Dorsolateral prefrontal cortex (tissue), 120 donors: ENCODE measurements at regions of chr1 and their contacts with region 1.

Region 1: DNA sequence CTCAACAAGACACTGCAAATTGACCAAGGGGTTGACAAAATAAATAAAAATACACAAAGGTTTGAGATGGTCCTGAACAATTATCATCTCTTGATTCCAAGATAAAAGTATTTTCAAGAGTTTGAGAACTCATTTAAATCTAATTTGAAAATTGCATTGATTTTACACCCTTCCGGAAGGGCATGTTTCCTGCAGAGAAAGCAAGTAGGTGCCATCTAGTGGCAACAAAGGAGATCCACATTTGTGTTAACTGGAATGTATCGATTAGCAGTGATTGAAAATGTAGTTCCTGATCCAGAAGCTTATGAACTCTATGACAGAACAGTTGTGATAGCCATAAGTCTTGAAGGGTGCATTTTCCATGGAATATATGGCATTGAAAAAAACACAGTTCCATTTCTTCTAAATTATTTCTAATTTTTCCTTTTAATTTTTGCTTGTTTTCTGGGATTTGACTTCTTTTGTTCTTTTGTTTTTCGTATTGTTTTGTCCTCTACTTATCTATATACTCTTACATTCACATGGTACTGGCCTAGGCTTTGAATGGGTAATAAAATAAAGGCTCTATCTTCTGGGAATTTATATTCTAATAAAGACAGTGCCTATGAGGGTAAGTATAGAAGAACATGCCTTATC is 143.7 kb downstream of the DNM3 start:
- DNase-seq: no peak
- H3K4me3 ChIP-seq: peak overlapping the region in 1 of 59 donors; percentile 13
- H3K27ac ChIP-seq: peak overlapping the region in 46 of 59 donors; percentile 1 to 77 (median 60)
- H3K27me3 ChIP-seq: no peaks in the 10 kb centered on the region
- CTCF ChIP-seq: peak; percentile 73 to 97 (median 89)

Region 2: GRCh38 chr1:171898941-171899340 is 86.0 kb before region 1 on chr1:
- intact Hi-C with region 1: loop called in 1 of 2 experiments (anchors 5 kb)
- DNase-seq: peak; percentile 38 to 92 (median 86)
- H3K4me3 ChIP-seq: peak overlapping the region in 58 of 59 donors; percentile 1 to 69 (median 42)
- H3K27ac ChIP-seq: peak overlapping the region; percentile 62 to 100 (median 95)
- H3K27me3 ChIP-seq: no peaks in the 10 kb centered on the region
- CTCF ChIP-seq: peak in 23 of 56 donors; percentile 9 to 46 (median 18)

Region 3: DNA sequence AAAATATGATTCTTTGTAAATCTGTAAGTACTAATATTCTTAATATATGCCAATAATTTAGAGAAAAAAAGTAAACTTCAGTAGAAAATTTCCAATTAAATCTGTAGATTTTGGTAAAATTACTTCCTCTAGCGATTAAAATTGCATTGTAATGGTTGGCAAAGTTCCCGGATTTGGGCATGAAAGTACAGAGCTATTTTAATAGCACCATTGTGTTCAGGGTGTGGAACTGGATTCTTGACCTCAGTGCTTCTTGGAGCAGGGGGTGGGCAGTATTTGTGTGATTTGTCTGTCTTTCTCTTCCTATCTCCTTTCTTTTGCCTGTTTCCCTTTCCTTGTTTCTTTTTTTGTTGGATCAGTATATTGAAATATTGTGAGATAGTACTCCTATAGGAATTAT is 71.6 kb before region 1 on chr1:
- intact Hi-C with region 1: loop called in 1 of 2 experiments (anchors 5 kb)
- DNase-seq: no peak
- H3K4me3 ChIP-seq: peak overlapping the region in 10 of 59 donors; percentile 0 to 41 (median 10)
- H3K27ac ChIP-seq: peak overlapping the region in 58 of 59 donors; percentile 2 to 89 (median 79)
- H3K27me3 ChIP-seq: no peaks in the 10 kb centered on the region
- CTCF ChIP-seq: peak in 1 of 56 donors; percentile 9